ENCODE measurements at regions of chr1 and their contacts with region 1.

Region 1: GRCh38 chr1:201530741-201531531 is 8.0 kb upstream of the NAV1 start:
- H3K4me3 Mint-ChIP-seq: no peak overlapping the region
- H3K27ac Mint-ChIP-seq: no peak overlapping the region
- H3K4me1 Mint-ChIP-seq: peaks cover 34% of the 10 kb centered on the region
- H3K27me3 Mint-ChIP-seq: peaks cover 7% of the 10 kb centered on the region

Region 2: DNA sequence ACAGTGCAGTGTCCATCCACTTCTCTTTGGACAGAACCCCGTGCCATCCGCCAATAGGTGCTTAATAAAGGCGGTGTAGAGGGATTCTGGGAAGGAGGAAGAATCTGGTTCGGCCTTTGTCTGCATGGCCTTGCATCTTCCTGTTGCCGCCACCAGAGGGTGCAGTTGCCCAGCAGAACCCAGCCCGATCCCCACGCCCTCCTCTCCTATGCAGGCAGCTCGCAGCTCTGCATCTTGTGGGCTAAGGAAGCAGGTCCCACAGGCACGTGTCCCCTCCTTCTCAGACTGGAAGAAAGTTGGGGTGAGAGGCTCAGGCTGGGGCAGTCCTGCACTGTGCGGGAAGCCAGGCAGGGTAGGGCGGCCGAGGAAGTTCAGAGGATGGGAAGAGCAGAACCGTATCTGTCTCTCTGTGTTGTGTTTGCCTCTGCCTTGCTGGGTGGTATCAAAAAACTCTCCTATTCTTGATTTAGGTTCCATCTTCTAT is 28.8 kb after region 1 on chr1:
- intact Hi-C with region 1: loop called (anchors 1 kb)
- H3K4me3 Mint-ChIP-seq: no peak overlapping the region
- H3K27ac Mint-ChIP-seq: no peak overlapping the region
- H3K4me1 Mint-ChIP-seq: peaks cover 21% of the 10 kb centered on the region
- H3K27me3 Mint-ChIP-seq: peaks cover 6% of the 10 kb centered on the region

Region 3: DNA sequence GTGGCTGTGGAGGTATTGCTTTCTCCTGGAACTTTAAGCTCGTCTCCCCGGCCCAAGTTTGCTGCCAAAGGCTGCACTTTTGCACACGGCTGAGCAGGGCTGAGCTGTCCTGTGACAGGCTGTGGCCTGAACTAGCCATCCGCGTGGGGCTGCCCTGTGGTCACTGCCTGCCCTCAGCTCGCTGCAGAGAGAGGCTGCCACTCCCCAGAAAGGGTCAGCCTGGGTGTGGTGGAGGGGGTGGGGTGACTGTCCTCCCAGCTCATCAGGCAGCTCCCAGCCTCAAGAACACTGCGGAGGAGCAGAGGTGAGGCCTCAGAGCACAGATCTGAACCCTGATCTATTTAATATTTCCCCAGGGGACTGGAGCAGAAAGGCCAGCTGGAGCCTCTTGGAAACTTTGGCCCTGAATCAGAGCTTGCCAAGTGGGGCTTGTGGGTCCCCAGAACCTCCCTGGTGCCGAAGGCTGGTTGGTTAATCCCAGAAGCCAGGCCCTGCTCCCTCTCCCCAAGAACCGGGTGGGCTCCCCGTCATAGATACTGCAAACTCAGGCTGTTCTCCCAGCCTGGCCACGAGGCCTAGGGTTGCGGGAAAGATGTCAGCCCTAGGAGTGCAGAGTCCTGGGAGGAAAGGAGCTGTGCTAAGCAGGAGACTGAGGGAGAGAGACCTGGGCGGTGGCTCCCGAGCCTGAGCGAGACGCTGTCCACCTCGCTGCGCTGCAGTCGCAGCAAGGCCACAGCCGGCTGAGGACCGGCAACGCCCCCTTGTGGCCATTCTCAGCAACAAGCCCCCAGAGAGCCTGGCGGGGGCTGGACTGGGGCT is 172.9 kb after region 1 on chr1:
- intact Hi-C with region 1: loop called (anchors 1 kb)
- H3K4me3 Mint-ChIP-seq: no peak overlapping the region
- H3K27ac Mint-ChIP-seq: no peak overlapping the region
- H3K4me1 Mint-ChIP-seq: no peaks in the 10 kb centered on the region
- H3K27me3 Mint-ChIP-seq: peaks cover 4% of the 10 kb centered on the region

Region 4: GRCh38 chr1:201970334-201971159 is 439.6 kb after region 1 on chr1:
- intact Hi-C with region 1: loop called (anchors 10 kb)
- H3K4me3 Mint-ChIP-seq: no peak overlapping the region
- H3K27ac Mint-ChIP-seq: no peak overlapping the region
- H3K4me1 Mint-ChIP-seq: no peaks in the 10 kb centered on the region
- H3K27me3 Mint-ChIP-seq: peaks cover 2% of the 10 kb centered on the region

Measured in dendritic cell treated with granulocyte-macrophage colony-stimulating factor and Interleukin-4, amounts not matched to agents 40 ng/mL and 50 ng/mL, for 4 days (primary cell).